ENCODE measurements at regions of chr12 and their contacts with region 1.

Region 1: GRCh38 chr12:49336645-49337584 is at the start of gene C1QL4:
- DNase-seq: peak in 9 of 10 donors; percentile 59 to 78 (median 72)
- H3K4me3 ChIP-seq: peak within 1 kb of the TSS in 57 of 59 donors; percentile 10 to 68 (median 46)
- H3K27ac ChIP-seq: no peak within 1 kb of the TSS
- H3K27me3 ChIP-seq: peaks cover 0 to 84% (median 43%) of the 10 kb centered on the region in 45 donors
- CTCF ChIP-seq: peak; percentile 48 to 99 (median 92)
- total RNA-seq, gene C1QL4: 0.19 to 1.4 (median 0.44) TPM in 69 of 120 experiments, not detected in the others

Region 2: GRCh38 chr12:48758221-48758620 is 578.7 kb before region 1 on chr12:
- intact Hi-C with region 1: no loop called
- DNase-seq: no peak
- H3K4me3 ChIP-seq: no peak overlapping the region
- H3K27ac ChIP-seq: no peak overlapping the region
- H3K27me3 ChIP-seq: no peaks in the 10 kb centered on the region
- CTCF ChIP-seq: no peak

Region 3: GRCh38 chr12:49188914-49189367 is 148.0 kb before region 1 on chr12 and contains the start of gene TUBA1A:
- intact Hi-C with region 1: no loop called
- DNase-seq: peak; percentile 93 to 100 (median 99)
- H3K4me3 ChIP-seq: peak within 1 kb of the TSS; percentile 62 to 100 (median 98)
- H3K27ac ChIP-seq: peak within 1 kb of the TSS; percentile 98 to 100 (median 100)
- H3K27me3 ChIP-seq: no peaks in the 10 kb centered on the region
- CTCF ChIP-seq: peak in 7 of 56 donors; percentile 2 to 29 (median 14)
- total RNA-seq, gene TUBA1A: 197 to 1,976 (median 609) TPM

Region 4: DNA sequence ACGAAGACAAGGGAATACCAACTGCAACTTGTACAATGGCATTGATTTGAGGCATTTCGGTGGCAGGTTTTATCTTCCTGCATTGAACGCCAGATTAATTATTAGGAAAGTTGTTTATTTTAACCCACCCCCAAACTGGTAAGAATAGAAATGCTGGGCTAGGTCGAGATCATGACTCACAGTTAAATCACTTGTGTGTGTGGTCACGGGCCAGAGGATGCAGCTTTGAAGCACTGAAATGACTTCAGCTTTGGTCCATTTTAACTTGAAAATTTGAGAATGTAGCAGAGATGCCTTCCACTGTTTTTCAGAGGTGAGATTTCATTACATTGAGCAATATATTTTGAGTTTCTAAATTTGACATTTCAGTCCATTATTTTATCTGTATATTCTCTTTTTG is 178.4 kb after region 1 on chr12:
- intact Hi-C with region 1: loop called in 1 of 2 experiments (anchors 5 kb)
- DNase-seq: no peak
- H3K4me3 ChIP-seq: no peak overlapping the region
- H3K27ac ChIP-seq: no peak overlapping the region
- H3K27me3 ChIP-seq: no peaks in the 10 kb centered on the region
- CTCF ChIP-seq: no peak